ENCODE measurements at regions of chr5 and their contacts with region 1.

Region 1: DNA sequence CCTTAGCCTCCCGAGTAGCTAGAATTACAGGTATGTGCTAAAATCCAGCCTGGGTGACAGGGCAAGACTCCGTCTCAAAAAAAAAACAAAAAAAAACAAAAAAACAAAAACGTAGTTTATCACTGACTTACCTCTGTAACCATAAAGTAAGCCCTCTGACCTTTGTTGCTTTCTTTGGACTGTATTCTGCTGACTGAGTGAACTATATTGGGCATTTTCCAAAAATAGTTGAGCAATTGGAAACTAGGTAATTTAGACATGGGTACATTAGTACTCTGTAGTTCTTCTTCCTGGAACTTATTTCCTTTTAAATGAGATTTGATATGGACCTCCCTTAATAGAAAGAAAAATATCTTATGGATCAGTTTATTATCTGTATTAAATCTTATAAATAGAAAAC is 66.6 kb downstream of the ANKHD1 start:
- DNase-seq: no peak
- ATAC-seq: no peak
- H3K4me3 ChIP-seq: no peak overlapping the region
- H3K4me3 Mint-ChIP-seq: no peak overlapping the region
- H3K27ac ChIP-seq: no peak overlapping the region
- H3K27ac Mint-ChIP-seq: no peak overlapping the region
- H3K4me1 ChIP-seq: no peaks in the 10 kb centered on the region
- H3K4me1 Mint-ChIP-seq: no peaks in the 10 kb centered on the region
- H3K27me3 ChIP-seq: no peaks in the 10 kb centered on the region
- H3K27me3 Mint-ChIP-seq: no peaks in the 10 kb centered on the region
- CTCF ChIP-seq: no peak

Region 2: DNA sequence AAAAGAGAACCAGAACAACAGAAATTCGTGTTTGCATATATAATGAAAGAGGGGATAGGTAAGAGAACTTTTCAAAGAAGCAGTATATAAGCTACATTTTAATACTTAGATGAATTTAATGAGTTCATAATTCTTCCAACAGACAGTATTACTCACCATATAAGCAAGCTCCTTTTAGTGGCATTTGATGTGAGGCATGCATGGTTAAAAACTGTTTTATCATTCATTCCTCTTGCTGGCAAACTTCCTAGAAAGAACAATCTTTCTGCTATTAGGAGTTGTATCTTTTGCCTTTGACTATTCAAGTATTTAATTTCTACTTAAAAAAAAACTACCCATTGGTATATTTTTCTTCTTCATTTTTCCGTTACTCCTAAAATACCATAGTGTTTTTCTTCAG is 13.6 kb after region 1 on chr5:
- CTCF ChIA-PET with region 1: no interaction called
- POLR2A ChIA-PET with region 1: no interaction called
- intact Hi-C with region 1: loop called in 1 of 2 experiments (anchors 2 kb)
- DNase-seq: no peak
- ATAC-seq: no peak
- H3K4me3 ChIP-seq: no peak overlapping the region
- H3K4me3 Mint-ChIP-seq: no peak overlapping the region
- H3K27ac ChIP-seq: no peak overlapping the region
- H3K27ac Mint-ChIP-seq: no peak overlapping the region
- H3K4me1 ChIP-seq: no peaks in the 10 kb centered on the region
- H3K4me1 Mint-ChIP-seq: peaks cover 2% of the 10 kb centered on the region
- H3K27me3 ChIP-seq: no peaks in the 10 kb centered on the region
- H3K27me3 Mint-ChIP-seq: no peaks in the 10 kb centered on the region
- CTCF ChIP-seq: no peak

Measured in CD8-positive, alpha-beta T cell (primary cell).